Panc1 (cell line): ENCODE measurements at regions of chr1 and their contacts with region 1.

Region 1: GRCh38 chr1:207654320-207654719 is 9.4 kb downstream of the CR1L start:
- DNase-seq: no peak
- ATAC-seq: no peak
- H3K4me3 ChIP-seq: no peak overlapping the region
- H3K27ac ChIP-seq: no peak overlapping the region
- H3K4me1 ChIP-seq: no peaks in the 10 kb centered on the region
- H3K27me3 ChIP-seq: peaks cover 9% of the 10 kb centered on the region
- CTCF ChIP-seq: peak; percentile 28; the same call in 1 of the 2 replicates

Region 2: GRCh38 chr1:207691841-207692240 is 37.5 kb after region 1 on chr1:
- CTCF ChIA-PET with region 1: no interaction called
- POLR2A ChIA-PET with region 1: no interaction called
- in situ Hi-C with region 1: no loop called
- intact Hi-C with region 1: loop called (anchors 5 kb)
- DNase-seq: no peak
- ATAC-seq: peak; percentile 69; the same call in 1 of the 2 replicates
- H3K4me3 ChIP-seq: peak overlapping the region; percentile 6 to 36
- H3K27ac ChIP-seq: no peak overlapping the region
- H3K4me1 ChIP-seq: no peaks in the 10 kb centered on the region
- H3K27me3 ChIP-seq: peaks cover 7% of the 10 kb centered on the region
- CTCF ChIP-seq: no peak

Region 3: DNA sequence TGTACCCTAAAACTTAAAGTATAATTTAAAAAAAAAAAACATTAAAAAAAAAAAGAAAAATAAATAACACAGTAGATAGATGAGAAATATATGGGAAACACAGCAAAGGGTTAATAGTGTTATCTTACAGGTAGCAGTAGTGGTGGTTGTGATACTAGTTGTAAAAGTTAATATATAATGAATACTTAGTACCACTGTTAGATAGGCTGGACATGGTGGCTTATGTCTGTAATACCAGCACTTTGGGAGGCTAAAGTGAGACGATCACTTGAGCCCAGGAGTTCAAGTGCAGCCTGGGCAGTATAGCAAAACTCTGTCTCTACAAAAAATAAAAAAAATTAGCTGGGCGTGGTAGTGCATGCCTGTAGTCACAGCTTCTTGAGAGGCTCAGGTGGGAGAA is 64.9 kb after region 1 on chr1:
- CTCF ChIA-PET with region 1: no interaction called
- POLR2A ChIA-PET with region 1: no interaction called
- in situ Hi-C with region 1: no loop called
- intact Hi-C with region 1: no loop called
- DNase-seq: no peak
- ATAC-seq: no peak
- H3K4me3 ChIP-seq: no peak overlapping the region
- H3K27ac ChIP-seq: no peak overlapping the region
- H3K4me1 ChIP-seq: no peaks in the 10 kb centered on the region
- H3K27me3 ChIP-seq: no peaks in the 10 kb centered on the region
- CTCF ChIP-seq: no peak